ENCODE measurements at regions of chr20 and their contacts with region 1.

Region 1: DNA sequence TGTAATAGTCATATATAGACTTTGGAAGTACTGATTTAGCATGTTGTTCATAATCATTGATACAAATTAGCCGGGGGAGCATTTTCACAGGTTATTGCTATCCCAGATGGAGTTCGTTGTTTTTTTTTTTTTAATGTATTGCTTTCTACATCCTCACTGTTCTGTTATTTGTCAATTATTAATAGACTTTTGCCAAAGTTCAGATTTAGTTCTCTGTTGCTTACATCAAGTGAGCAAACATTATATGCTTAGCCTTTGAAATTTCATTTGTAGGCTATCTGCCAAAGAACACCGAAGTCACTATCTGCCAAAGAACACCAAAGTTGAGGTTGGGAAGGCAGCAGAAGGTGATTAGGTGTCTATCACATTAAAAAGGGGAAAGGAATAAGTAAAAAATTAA is at the start of gene HAO1:
- DNase-seq: no peak
- total RNA-seq, gene HAO1: not detected

Region 2: DNA sequence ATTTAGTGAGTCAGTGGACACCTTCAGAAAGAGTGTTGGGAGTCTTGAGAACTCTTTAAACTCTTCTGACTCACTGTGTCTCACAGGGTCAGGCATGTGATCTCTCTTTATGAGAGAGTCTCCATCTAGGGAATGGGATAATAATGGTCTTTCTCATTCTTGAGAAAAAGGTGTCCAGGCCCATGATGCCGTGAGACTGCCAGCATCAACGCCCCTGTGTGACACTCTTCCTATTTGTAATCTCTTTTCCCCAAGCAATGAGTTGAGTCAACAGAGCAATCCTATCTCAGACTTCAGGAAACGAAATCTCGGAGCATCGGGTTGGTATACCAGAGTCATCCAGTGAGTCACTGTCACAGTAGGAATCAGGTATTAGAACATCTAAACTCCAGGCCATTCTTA is 1255.2 kb before region 1 on chr20:
- intact Hi-C with region 1: no loop called
- DNase-seq: no peak

Region 3: GRCh38 chr20:6708010-6708409 is 1232.3 kb before region 1 on chr20:
- intact Hi-C with region 1: no loop called
- DNase-seq: peak; percentile 81

Region 4: DNA sequence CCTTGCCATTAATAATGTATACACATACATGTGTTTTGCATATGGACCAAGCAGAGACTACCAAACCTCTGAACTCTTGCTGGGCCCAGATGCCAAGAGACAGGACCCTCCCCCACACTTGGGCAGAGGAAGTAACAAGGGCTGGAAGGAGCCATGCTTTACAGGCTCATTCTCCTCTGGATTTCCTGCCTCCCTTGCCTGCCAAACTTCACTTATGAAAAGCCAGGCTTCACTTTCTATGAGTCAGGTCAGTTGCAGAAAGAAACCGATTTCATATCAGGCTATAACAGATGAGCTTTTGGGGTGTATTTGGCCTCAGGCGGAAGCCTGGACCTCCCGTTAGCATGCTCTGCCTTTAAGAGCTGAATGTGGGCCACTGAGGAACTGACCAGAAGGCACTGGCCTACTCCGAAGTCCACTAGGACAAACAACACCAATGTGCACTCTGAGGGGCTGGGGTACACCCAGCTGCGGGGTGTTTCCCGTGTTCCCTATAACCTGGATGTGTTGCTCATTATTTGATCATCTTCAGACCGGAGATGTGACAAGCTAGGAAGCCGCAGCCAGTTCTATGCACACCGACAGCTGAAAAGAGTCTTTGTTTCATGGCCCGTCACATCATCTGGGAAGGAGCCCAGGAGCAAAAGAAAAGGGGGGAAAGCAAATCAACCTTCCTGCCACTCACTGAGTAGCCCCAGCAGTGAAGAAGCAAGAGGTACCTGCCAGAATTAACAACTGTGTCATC is 28.6 kb before region 1 on chr20:
- intact Hi-C with region 1: no loop called
- DNase-seq: no peak

Region 5: DNA sequence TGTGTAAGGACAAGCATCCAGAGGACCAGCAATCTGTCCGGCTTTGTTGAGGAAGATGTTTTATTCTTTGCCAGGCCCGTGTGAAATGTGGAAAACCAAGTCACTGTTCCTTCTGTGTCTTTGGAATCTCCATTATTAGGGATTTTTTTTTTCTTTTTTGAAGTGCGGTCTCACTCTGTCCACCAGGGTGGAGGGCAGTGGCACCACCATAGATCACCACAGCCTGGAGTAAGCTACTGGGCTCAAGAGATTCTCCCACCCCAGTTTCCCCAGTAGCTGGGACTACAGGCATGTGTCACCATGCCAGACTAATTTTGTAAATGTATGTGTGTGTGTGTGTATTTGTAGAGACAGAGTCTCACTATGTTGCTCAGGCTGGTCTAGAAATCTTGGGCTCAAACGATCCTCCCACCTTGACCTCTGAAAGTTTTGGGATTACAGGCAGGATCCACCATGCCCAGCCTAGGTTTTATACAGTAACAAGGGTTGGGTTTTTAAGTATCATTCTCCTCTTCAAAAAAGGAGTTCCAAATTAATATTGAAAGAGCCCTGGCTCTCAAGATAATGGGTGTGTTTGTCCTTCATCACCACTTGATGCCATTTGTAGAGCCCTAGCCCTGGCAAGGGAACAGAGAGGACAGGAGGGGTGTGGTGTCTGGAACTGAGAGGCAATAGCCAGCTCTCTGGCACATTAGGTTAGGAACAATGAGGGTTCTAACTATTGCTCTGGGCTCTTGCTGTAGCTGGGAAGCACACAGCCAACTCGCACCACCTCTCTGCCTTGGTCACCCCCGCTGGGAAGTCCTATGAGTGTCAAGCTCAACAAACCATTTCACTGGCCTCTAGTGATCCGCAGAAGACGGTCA is 1577.2 kb after region 1 on chr20:
- intact Hi-C with region 1: loop called in 1 of 2 experiments (anchors 5 kb)
- DNase-seq: no peak

Measured in posterior vena cava (tissue), 2 donors.